AG04450 (cell line): ENCODE measurements at regions of chr14 and their contacts with region 1.

Region 1: DNA sequence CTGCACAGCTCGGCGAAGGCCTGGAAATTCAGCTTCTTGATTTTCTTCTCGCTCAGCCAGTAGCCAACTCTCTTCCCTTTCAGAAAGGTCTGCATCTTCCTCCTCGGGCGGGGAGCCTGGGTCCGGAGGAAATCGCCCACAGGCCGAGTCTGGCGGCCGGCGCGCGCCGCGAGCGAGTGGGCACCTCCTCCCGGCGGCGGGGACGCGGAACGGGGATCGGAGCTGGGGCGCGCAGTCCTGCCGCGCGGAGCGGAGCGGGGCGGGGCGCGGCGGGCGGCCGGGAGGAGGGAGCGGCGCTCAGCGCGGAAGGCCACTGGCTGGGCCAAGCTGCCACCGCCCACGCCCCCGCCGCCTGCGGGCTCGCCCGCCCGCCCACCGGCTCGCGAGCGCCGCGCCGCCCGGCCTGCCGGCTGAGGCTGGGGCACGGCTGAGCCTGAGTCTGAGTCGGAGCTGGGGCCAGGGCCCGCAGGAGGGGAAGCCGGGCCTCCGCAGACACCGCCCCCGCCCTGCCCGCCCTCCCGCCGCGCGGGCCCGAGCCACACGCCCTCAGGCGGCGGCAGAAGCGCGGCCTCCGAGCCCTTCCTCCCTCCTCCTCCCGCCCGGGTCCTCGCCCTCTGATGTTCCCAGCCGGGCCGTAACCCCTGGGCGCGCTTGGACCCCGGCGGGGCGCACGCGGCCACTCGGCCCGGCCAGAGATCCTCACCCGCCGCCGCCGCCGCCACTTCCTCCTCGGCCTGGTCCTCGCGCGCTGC is 480 bp downstream of the ITPK1 start:
- DNase-seq: no peak
- H3K4me3 ChIP-seq: peak overlapping the region; percentile 74
- H3K27ac ChIP-seq: no peak overlapping the region
- H3K27me3 ChIP-seq: no peaks in the 10 kb centered on the region
- CTCF ChIP-seq: no peak

Region 2: GRCh38 chr14:92585981-92586937 is 529.0 kb before region 1 on chr14:
- CTCF ChIA-PET with region 1: no interaction called
- POLR2A ChIA-PET with region 1: no interaction called
- DNase-seq: peak; percentile 85
- H3K4me3 ChIP-seq: peak overlapping the region; percentile 18
- H3K27ac ChIP-seq: peak overlapping the region; percentile 75
- H3K27me3 ChIP-seq: no peaks in the 10 kb centered on the region
- CTCF ChIP-seq: no peak

Region 3: GRCh38 chr14:93086441-93087055 is 28.7 kb before region 1 on chr14:
- CTCF ChIA-PET with region 1: interaction called, 13 read pairs
- POLR2A ChIA-PET with region 1: interaction called, 3 read pairs
- DNase-seq: no peak
- H3K4me3 ChIP-seq: no peak overlapping the region
- H3K27ac ChIP-seq: no peak overlapping the region
- H3K27me3 ChIP-seq: no peaks in the 10 kb centered on the region
- CTCF ChIP-seq: no peak

Region 4: GRCh38 chr14:93132470-93133065 is 17.3 kb after region 1 on chr14:
- CTCF ChIA-PET with region 1: interaction called, 84 read pairs
- POLR2A ChIA-PET with region 1: interaction called, 5 read pairs
- DNase-seq: no peak
- H3K4me3 ChIP-seq: no peak overlapping the region
- H3K27ac ChIP-seq: no peak overlapping the region
- H3K27me3 ChIP-seq: peaks cover 12% of the 10 kb centered on the region
- CTCF ChIP-seq: peak; percentile 55

Region 5: DNA sequence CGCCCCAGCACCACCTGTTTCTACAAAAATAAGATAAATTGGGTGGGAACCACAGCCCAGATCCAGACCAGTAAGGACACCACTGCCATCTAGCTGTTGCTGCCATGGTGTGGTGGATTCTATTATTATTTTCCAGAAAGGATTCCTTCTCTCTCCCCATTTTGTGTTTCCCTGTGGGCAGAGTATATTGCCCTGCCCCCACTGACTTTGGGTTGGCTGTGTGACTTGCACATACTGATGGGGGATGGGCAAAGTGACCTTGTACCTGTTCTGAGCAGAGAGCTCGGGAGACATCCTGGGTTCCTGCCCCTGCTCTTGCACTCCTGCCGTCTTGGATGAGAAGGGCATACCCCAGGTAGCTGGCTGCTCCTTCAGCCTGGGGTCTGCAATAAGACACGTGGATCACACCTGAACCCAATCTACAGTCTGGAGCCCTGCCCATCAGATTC is 45.1 kb after region 1 on chr14:
- CTCF ChIA-PET with region 1: interaction called, 14 read pairs
- POLR2A ChIA-PET with region 1: no interaction called
- DNase-seq: no peak
- H3K4me3 ChIP-seq: no peak overlapping the region
- H3K27ac ChIP-seq: no peak overlapping the region
- H3K27me3 ChIP-seq: no peaks in the 10 kb centered on the region
- CTCF ChIP-seq: peak; percentile 51

Region 6: GRCh38 chr14:93206793-93207467 is 91.7 kb after region 1 on chr14 and contains the starts of genes GON7 and UBR7:
- CTCF ChIA-PET with region 1: interaction called, 11 read pairs
- POLR2A ChIA-PET with region 1: no interaction called
- DNase-seq: peak; percentile 89
- H3K4me3 ChIP-seq: peak within 1 kb of the TSS; percentile 88
- H3K27ac ChIP-seq: peak within 1 kb of the TSS; percentile 39
- H3K27me3 ChIP-seq: no peaks in the 10 kb centered on the region
- CTCF ChIP-seq: peak; percentile 41
- polyA plus RNA-seq, gene GON7: 7.5 and 8.2 TPM in 2 replicates
- polyA plus RNA-seq, gene UBR7: 25.4 and 30.7 TPM in 2 replicates